HepG2 (cell line): ENCODE measurements at regions of chr19 and their contacts with region 1.

Region 1: GRCh38 chr19:5031231-5032100 is 62.6 kb downstream of the KDM4B start:
- DNase-seq: peak; percentile 73
- ATAC-seq: peak; percentile 88
- H3K4me3 ChIP-seq: no peak overlapping the region
- H3K27ac ChIP-seq: no peak overlapping the region
- H3K4me1 ChIP-seq: peaks cover 22% of the 10 kb centered on the region
- H3K27me3 ChIP-seq: no peaks in the 10 kb centered on the region
- CTCF ChIP-seq: peak; percentile 97
- EP300 ChIP-seq: no peak
- POLR2A ChIP-seq: no peak
- RAD21 ChIP-seq: peak; percentile 95

Region 2: DNA sequence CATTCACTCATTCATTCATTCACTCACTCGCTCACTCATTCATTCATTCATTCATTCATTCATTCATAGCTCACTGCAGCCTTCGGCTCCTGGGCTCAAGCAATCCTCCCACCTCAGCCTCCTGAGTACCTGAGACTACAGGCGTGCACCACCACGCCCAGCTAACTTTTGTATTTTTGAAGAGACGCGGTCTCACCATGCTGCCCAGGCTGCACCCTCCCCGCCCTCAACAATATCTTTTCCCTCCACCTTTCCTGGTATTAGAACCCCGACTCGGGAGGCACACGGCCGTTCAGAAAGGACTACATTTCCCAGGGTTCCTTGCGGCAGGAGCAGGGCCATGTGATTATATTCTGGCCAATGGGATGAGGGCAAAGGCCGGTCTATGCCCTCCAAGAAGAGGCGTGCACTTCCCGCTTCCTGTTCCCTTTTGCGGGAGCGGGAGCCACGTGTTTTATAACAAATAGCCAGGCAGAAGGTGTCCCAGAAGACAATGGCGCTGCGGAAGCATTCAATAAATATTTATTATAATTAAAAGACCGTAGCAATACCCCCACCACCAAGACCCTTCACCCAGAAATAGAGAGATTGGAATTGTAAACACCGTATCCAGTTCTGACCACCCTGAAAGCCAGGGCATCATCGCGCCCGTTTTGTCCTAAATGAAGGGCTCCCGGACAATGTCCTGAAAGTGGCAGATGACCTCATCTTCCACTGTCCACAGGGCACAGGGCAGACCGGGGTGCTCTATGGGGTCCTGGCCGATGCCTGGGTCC is 215.9 kb before region 1 on chr19:
- CTCF ChIA-PET with region 1: interaction called, 11 read pairs
- POLR2A ChIA-PET with region 1: no interaction called
- in situ Hi-C with region 1: loop called (anchors 5 kb)
- intact Hi-C with region 1: no loop called
- DNase-seq: peak; percentile 93
- ATAC-seq: peak; percentile 82
- H3K4me3 ChIP-seq: peak overlapping the region in 1 of 3 experiments; percentile 27; a peak in 1 of 6 replicates
- H3K27ac ChIP-seq: peak overlapping the region; percentile 45
- H3K4me1 ChIP-seq: peaks cover 37% of the 10 kb centered on the region
- H3K27me3 ChIP-seq: no peaks in the 10 kb centered on the region
- CTCF ChIP-seq: no peak
- EP300 ChIP-seq: no peak
- POLR2A ChIP-seq: no peak; a peak in 1 of 4 replicates
- RAD21 ChIP-seq: no peak

Region 3: GRCh38 chr19:4870025-4870700 is 161.3 kb before region 1 on chr19:
- CTCF ChIA-PET with region 1: interaction called, 5 read pairs
- POLR2A ChIA-PET with region 1: no interaction called
- in situ Hi-C with region 1: loop called (anchors 10 kb)
- intact Hi-C with region 1: loop called (anchors 1 kb)
- DNase-seq: peak; percentile 98
- ATAC-seq: peak; percentile 81
- H3K4me3 ChIP-seq: peak overlapping the region; percentile 19 to 34 (median 24); a peak in 2 of 6 replicates
- H3K27ac ChIP-seq: peak overlapping the region; percentile 70
- H3K4me1 ChIP-seq: peaks cover 54% of the 10 kb centered on the region
- H3K27me3 ChIP-seq: no peaks in the 10 kb centered on the region; a peak in 1 of 5 replicates
- CTCF ChIP-seq: no peak
- EP300 ChIP-seq: peak; percentile 60 to 80; a peak in 3 of 4 replicates
- POLR2A ChIP-seq: no peak
- RAD21 ChIP-seq: peak; percentile 37

Region 4: DNA sequence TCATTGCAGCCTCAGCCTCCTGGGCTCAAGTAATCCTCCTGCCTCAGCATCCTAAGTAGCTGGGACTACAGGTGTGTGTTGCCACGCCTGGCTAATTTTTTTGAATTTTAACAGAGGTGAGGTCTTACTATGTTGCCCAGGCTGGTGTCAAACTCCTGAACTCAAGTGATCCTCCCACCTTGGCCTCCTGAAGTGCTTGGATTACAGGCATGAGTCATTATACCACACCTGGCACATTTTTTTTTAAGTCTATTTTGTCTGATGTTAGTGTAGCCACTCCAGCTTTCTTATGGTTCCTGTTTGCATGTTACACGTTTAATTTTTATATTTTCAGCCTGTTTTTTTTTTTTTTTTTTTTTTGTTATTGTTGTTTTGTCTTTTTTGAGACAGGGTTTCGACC is 37.8 kb before region 1 on chr19:
- CTCF ChIA-PET with region 1: no interaction called
- POLR2A ChIA-PET with region 1: no interaction called
- in situ Hi-C with region 1: loop called (anchors 5 kb)
- intact Hi-C with region 1: no loop called
- DNase-seq: no peak
- ATAC-seq: no peak
- H3K4me3 ChIP-seq: no peak overlapping the region
- H3K27ac ChIP-seq: no peak overlapping the region
- H3K4me1 ChIP-seq: peaks cover 16% of the 10 kb centered on the region
- H3K27me3 ChIP-seq: no peaks in the 10 kb centered on the region
- CTCF ChIP-seq: no peak
- EP300 ChIP-seq: no peak
- POLR2A ChIP-seq: no peak
- RAD21 ChIP-seq: no peak

Region 5: GRCh38 chr19:5001615-5002014 is 29.9 kb before region 1 on chr19:
- CTCF ChIA-PET with region 1: interaction called, 46 read pairs
- POLR2A ChIA-PET with region 1: interaction called, 7 read pairs
- in situ Hi-C with region 1: no loop called
- intact Hi-C with region 1: loop called (anchors 2 kb)
- DNase-seq: peak; percentile 58
- ATAC-seq: peak; percentile 78
- H3K4me3 ChIP-seq: no peak overlapping the region
- H3K27ac ChIP-seq: peak overlapping the region; percentile 49
- H3K4me1 ChIP-seq: peaks cover 27% of the 10 kb centered on the region
- H3K27me3 ChIP-seq: no peaks in the 10 kb centered on the region
- CTCF ChIP-seq: peak; percentile 77
- EP300 ChIP-seq: no peak
- POLR2A ChIP-seq: no peak
- RAD21 ChIP-seq: 0 out of 2 replicates have a peak, but pooled peaks have one; percentile 20